ENCODE measurements at regions of chr1 and their contacts with region 1.

Region 1: GRCh38 chr1:179002552-179003345 is 22.9 kb upstream of the FAM20B start:
- DNase-seq: peak; percentile 68
- H3K4me3 ChIP-seq: peak overlapping the region; percentile 30; the same call in 1 of the 2 replicates
- H3K27ac ChIP-seq: no peak overlapping the region
- H3K4me1 ChIP-seq: no peaks in the 10 kb centered on the region
- H3K27me3 ChIP-seq: no peaks in the 10 kb centered on the region

Region 2: DNA sequence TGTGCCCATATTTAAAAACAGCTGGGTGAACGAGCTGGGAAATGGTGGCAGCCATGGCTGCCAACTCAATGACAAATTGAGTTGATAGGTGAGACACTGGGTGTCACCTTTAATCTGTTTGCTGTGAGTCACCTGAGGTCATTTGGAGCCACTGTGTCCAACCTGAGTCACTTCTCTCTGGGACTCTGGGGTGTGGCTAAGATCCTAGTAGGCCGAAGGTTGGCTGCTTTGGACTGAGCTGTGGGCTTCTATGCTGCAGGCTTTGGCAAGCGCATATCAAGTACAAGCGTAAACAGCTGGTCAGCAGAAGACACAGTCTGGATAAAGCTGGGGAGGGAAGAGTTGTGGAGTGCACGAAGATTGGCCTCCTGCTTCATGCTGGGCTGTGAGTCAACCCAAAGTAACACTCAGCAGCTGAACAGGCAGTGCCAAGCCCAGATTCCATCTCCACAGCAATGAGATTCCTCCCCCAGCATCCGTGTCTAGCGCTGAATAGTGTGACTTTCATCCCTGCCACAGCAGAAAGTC is 465.8 kb before region 1 on chr1:
- in situ Hi-C with region 1: loop called (anchors 5 kb)
- DNase-seq: peak; percentile 99
- H3K4me3 ChIP-seq: peak overlapping the region; percentile 31
- H3K27ac ChIP-seq: peak overlapping the region; percentile 85
- H3K4me1 ChIP-seq: peaks cover 48% of the 10 kb centered on the region
- H3K27me3 ChIP-seq: no peaks in the 10 kb centered on the region

Region 3: DNA sequence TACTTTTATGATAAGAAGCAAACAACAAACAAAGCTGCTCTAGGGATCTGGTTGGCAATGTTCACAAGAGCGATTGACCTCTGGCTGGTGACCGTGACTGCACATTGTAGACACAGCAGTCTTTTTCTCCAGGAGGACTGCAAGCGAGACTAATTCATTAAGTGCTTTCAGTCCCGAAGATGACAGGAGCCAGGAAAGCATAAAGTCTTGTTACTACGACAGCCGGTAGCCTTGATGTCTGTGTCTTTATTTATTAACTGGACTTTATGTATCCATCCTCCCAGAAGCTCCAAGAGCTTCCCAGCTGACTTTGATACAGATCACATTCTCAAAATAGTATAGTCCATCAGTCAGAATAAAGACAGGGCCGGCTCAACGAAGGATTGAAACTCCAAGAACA is 758.5 kb after region 1 on chr1:
- in situ Hi-C with region 1: no loop called
- DNase-seq: no peak
- H3K4me3 ChIP-seq: no peak overlapping the region
- H3K27ac ChIP-seq: no peak overlapping the region
- H3K4me1 ChIP-seq: no peaks in the 10 kb centered on the region
- H3K27me3 ChIP-seq: peaks cover 30% of the 10 kb centered on the region

Measured in GM23248 (cell line).